ENCODE measurements at regions of chr11 and their contacts with region 1.

Region 1: GRCh38 chr11:19561011-19561410 is 151.6 kb upstream of the NAV2 start:
- DNase-seq: no peak
- H3K4me3 ChIP-seq: no peak overlapping the region
- CTCF ChIP-seq: no peak

Region 2: GRCh38 chr11:19701421-19701820 is 140.4 kb after region 1 on chr11:
- CTCF ChIA-PET with region 1: interaction called, 10 read pairs
- POLR2A ChIA-PET with region 1: no interaction called
- DNase-seq: no peak
- H3K4me3 ChIP-seq: no peak overlapping the region
- CTCF ChIP-seq: no peak

Region 3: GRCh38 chr11:19751055-19751454 is 190.0 kb after region 1 on chr11:
- CTCF ChIA-PET with region 1: interaction called, 452 read pairs
- POLR2A ChIA-PET with region 1: no interaction called
- DNase-seq: no peak
- H3K4me3 ChIP-seq: no peak overlapping the region
- CTCF ChIP-seq: no peak

Region 4: DNA sequence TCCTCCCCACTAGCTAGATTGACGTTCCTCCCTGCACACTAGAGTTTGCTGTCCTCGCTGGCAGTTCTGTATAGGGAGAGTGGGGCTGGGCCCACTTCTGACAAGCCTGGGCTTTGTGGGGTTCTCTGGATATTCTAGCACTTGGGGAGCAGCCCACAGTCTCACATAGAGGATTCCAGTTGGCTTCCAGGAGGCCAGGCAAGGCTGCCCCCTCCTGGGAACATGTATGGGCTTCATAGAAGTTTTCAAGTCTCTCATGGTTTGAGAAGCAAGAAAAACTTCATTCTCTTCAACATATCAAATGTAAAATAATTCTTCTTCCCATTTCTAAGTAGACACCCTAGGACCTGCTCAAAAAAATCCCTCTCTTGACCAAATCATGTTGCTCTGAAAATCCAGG is 239.2 kb after region 1 on chr11:
- CTCF ChIA-PET with region 1: interaction called, 26 read pairs
- POLR2A ChIA-PET with region 1: no interaction called
- DNase-seq: no peak
- H3K4me3 ChIP-seq: no peak overlapping the region
- CTCF ChIP-seq: peak; percentile 34

Measured in AG04449 (cell line).